Caco-2 (cell line): ENCODE measurements at regions of chr20 and their contacts with region 1.

Region 1: DNA sequence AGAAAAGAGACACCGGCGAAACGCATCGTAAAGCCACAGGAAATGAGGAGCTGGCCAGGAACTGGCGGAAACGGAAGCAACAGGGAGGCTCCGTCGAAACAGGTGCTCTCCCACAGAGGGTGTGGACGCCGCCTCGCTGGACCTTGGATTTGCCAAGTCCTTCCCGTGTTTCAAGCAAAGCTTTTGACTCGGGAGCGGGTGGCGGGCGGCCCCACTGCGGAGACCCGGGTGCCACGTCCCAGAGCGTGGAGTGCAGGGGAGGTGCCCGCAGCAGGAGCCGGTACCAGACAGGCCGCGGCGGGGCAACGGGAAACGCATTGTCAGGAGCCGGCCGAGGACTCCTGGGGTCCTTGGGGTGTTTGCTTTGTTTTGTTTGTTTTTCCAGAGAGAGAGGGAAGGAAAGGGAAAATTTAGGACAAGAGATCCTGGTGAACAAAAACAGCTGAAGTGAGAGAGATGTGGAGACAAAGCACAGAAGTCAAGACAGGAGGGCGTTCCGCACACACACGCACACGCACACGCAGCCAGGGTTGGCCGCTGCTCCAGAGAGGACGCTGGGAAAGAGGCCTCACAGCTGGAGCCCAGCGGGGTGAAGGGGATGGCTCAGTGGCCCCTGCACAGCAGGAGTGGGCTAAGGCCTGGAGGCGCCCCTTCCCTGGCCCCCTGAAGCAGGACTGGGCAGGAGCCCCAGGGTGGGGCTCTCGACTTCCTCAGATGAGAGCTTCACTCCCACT is 50.9 kb upstream of the CHRNA4 start:
- DNase-seq: no peak
- H3K4me3 ChIP-seq: no peak overlapping the region
- H3K4me3 Mint-ChIP-seq: no peak overlapping the region
- H3K27ac Mint-ChIP-seq: no peak overlapping the region
- H3K4me1 ChIP-seq: no peaks in the 10 kb centered on the region
- H3K4me1 Mint-ChIP-seq: no peaks in the 10 kb centered on the region
- H3K27me3 ChIP-seq: peaks cover 7% of the 10 kb centered on the region
- H3K27me3 Mint-ChIP-seq: peaks cover 29% of the 10 kb centered on the region
- CTCF ChIP-seq: no peak

Region 2: GRCh38 chr20:63394069-63394919 is 17.8 kb before region 1 on chr20:
- CTCF ChIA-PET with region 1: no interaction called
- POLR2A ChIA-PET with region 1: no interaction called
- intact Hi-C with region 1: no loop called
- DNase-seq: no peak
- H3K4me3 ChIP-seq: no peak overlapping the region
- H3K4me3 Mint-ChIP-seq: no peak overlapping the region
- H3K27ac Mint-ChIP-seq: no peak overlapping the region
- H3K4me1 ChIP-seq: no peaks in the 10 kb centered on the region
- H3K4me1 Mint-ChIP-seq: no peaks in the 10 kb centered on the region
- H3K27me3 ChIP-seq: peaks cover 2% of the 10 kb centered on the region; the same call in 1 of the 2 replicates
- H3K27me3 Mint-ChIP-seq: peaks cover 35% of the 10 kb centered on the region
- CTCF ChIP-seq: no peak

Region 3: DNA sequence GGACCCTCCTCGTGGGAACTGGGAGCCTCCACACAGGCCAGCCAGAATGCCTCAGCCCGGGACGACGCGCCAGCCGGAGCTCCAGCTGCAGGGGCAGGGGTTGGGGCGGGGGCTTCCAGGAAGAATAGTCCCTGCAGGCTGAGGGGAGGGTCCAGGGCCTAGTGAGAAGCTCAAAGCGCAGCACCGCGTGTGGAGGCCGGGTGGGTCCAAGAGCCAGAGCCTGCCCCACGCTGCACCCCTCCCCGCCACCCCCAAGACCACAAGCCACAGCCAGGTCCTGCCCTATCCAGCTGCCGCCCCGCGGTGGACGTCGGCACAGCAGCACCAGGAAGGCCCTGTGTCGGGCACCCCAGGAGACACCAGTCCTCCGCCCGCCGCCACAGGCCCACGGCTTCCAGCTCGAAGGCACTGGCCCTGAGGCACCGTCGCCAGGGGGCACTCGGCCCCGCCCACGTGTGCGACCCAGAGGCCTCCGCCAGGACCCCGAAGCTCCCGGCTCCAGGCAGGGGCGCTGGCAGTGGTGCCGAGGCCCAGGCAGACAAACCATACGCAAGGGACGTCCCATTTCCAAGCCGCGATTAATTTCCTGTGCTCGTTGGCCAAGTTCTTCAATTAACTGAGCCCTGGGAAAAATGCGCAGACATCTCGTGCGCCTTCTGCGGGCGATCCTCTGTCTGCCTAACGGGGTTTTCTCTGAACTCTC is 40.9 kb after region 1 on chr20:
- CTCF ChIA-PET with region 1: no interaction called
- POLR2A ChIA-PET with region 1: interaction called, 13 read pairs
- intact Hi-C with region 1: no loop called
- DNase-seq: peak in 1 of 2 experiments; percentile 68
- H3K4me3 ChIP-seq: no peak overlapping the region
- H3K4me3 Mint-ChIP-seq: no peak overlapping the region
- H3K27ac Mint-ChIP-seq: no peak overlapping the region
- H3K4me1 ChIP-seq: no peaks in the 10 kb centered on the region
- H3K4me1 Mint-ChIP-seq: no peaks in the 10 kb centered on the region
- H3K27me3 ChIP-seq: peaks cover 9% of the 10 kb centered on the region
- H3K27me3 Mint-ChIP-seq: peaks cover 31% of the 10 kb centered on the region
- CTCF ChIP-seq: peak; percentile 54 to 55